Activated naive CD4-positive, alpha-beta T cell treated with anti-CD3 and anti-CD28 coated beads for 36 hours (primary cell): ENCODE measurements at regions of chr12 and their contacts with region 1.

Region 1: GRCh38 chr12:43602738-43603137 is 50.7 kb upstream of the ADAMTS20 start:
- DNase-seq: no peak
- H3K4me3 Mint-ChIP-seq: no peak overlapping the region
- H3K27ac Mint-ChIP-seq: no peak overlapping the region
- H3K4me1 Mint-ChIP-seq: no peaks in the 10 kb centered on the region
- H3K27me3 Mint-ChIP-seq: no peaks in the 10 kb centered on the region

Region 2: GRCh38 chr12:42744539-42745156 is 858.1 kb before region 1 on chr12:
- CTCF ChIA-PET with region 1: no interaction called
- intact Hi-C with region 1: no loop called
- DNase-seq: no peak
- H3K4me3 Mint-ChIP-seq: no peak overlapping the region
- H3K27ac Mint-ChIP-seq: no peak overlapping the region
- H3K4me1 Mint-ChIP-seq: no peaks in the 10 kb centered on the region
- H3K27me3 Mint-ChIP-seq: no peaks in the 10 kb centered on the region

Region 3: GRCh38 chr12:43381879-43382278 is 220.9 kb before region 1 on chr12:
- CTCF ChIA-PET with region 1: no interaction called
- intact Hi-C with region 1: loop called (anchors 5 kb)
- DNase-seq: no peak
- H3K4me3 Mint-ChIP-seq: no peak overlapping the region
- H3K27ac Mint-ChIP-seq: no peak overlapping the region
- H3K4me1 Mint-ChIP-seq: no peaks in the 10 kb centered on the region
- H3K27me3 Mint-ChIP-seq: no peaks in the 10 kb centered on the region